Activated B cell treated with CpG ODN at 0.5 μM for 24 hours (primary cell): ENCODE measurements at regions of chr19 and their contacts with region 1.

Region 1: GRCh38 chr19:21020298-21021227 is at the start of gene ZNF430:
- DNase-seq: peak; percentile 77
- ATAC-seq: peak; percentile 95
- H3K4me3 Mint-ChIP-seq: peak within 1 kb of the TSS; percentile 100
- H3K27ac Mint-ChIP-seq: peak within 1 kb of the TSS; percentile 100
- H3K4me1 Mint-ChIP-seq: peaks cover 50% of the 10 kb centered on the region
- H3K27me3 Mint-ChIP-seq: no peaks in the 10 kb centered on the region
- CTCF ChIP-seq: no peak
- total RNA-seq, gene ZNF430: 36.4 and 39.8 TPM in 2 replicates

Region 2: DNA sequence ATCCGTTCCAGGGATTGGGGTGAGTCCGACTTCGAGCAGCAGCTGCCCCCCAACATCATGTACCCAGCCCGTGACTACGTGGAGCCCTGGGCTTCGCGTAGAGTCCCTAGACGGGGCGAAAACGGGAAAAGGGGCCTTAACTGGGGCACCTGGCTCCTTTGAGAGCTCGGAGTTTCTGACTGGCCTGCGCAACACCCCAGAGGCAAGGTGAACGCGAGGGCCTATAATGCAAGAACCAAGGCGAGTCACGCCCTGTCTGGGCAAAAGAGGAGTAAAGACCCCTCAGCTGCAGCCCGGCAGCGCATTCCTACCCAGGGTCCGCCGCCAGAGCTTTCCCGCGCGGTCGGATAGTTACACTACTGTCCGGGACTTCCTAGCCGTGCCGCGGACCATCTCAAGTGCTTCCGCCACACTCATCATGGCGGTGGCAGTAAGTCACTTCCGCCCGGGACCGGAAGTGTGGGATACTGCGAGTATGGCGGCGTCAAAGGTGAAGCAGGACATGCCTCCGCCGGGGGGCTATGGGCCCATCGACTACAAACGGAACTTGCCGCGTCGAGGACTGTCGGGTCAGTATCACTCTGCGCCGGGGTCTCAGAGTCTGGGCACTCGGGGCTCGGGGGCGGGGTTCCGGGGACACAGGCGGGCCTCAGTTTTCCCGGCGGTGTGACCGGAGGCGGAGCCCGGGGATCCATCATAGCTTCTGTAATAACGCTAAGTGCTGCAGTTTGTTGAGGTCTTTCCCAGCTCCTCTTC is 1504.6 kb before region 1 on chr19 and contains the start of gene NDUFA13:
- CTCF ChIA-PET with region 1: no interaction called
- POLR2A ChIA-PET with region 1: no interaction called
- intact Hi-C with region 1: loop called (anchors 5 kb)
- DNase-seq: peak; percentile 97
- ATAC-seq: peak; percentile 90
- H3K4me3 Mint-ChIP-seq: peak within 1 kb of the TSS; percentile 95
- H3K27ac Mint-ChIP-seq: peak within 1 kb of the TSS; percentile 93
- H3K4me1 Mint-ChIP-seq: peaks cover 38% of the 10 kb centered on the region
- H3K27me3 Mint-ChIP-seq: no peaks in the 10 kb centered on the region
- CTCF ChIP-seq: no peak
- total RNA-seq, gene NDUFA13: 294 and 317 TPM in 2 replicates

Region 3: GRCh38 chr19:20565321-20566018 is 455.1 kb before region 1 on chr19 and contains the start of gene ZNF737:
- CTCF ChIA-PET with region 1: no interaction called
- POLR2A ChIA-PET with region 1: interaction called, 12 read pairs
- intact Hi-C with region 1: no loop called
- DNase-seq: peak; percentile 72
- ATAC-seq: peak; percentile 90
- H3K4me3 Mint-ChIP-seq: peak within 1 kb of the TSS; percentile 99
- H3K27ac Mint-ChIP-seq: peak within 1 kb of the TSS; percentile 99
- H3K4me1 Mint-ChIP-seq: peaks cover 32% of the 10 kb centered on the region
- H3K27me3 Mint-ChIP-seq: no peaks in the 10 kb centered on the region
- CTCF ChIP-seq: no peak
- total RNA-seq, gene ZNF737: 42.7 and 50.9 TPM in 2 replicates

Region 4: DNA sequence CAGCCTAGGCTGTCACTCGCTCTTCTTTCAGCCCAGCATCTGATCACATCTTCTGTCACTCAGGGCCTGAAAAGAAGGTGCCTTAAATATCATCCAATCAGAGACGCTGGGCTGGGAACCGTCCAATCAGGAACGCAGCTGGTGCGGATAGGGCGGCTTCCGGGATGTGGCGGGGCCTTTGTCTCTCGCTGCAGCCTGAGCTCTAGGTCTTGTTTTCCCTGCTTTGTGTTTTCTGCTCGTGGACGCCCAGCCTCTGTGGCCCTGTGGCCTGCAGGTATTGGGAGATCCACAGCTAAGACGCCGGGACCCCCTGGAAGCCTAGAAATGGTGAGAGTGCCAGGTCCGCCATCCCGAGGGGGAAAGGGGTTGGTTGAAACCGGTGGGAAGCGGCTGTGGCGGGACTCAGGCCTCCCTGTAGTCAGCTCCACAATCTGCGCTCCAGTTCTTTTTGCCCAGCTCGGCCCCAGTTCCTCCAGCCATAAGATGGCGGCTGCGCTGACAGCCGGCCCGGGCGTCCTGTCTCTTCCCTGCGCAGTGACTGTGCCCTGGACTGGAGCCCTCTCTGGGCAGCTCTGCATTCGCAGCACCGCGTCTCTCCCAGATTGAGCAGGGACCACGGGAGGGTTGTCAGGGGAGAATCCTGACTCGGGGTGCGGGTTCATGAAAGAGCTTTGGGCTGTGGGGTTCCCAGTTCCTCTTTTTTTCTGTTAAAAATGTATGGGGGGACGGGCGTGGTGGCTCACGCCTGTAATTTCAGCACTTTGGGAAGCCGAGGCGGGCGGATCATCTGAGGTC is 97.3 kb before region 1 on chr19 and contains the start of gene ZNF85:
- CTCF ChIA-PET with region 1: no interaction called
- POLR2A ChIA-PET with region 1: interaction called, 12 read pairs
- intact Hi-C with region 1: loop called (anchors 1 kb)
- DNase-seq: peak; percentile 76
- ATAC-seq: peak; percentile 97
- H3K4me3 Mint-ChIP-seq: peak within 1 kb of the TSS; percentile 98
- H3K27ac Mint-ChIP-seq: peak within 1 kb of the TSS; percentile 96
- H3K4me1 Mint-ChIP-seq: peaks cover 13% of the 10 kb centered on the region
- H3K27me3 Mint-ChIP-seq: no peaks in the 10 kb centered on the region
- CTCF ChIP-seq: no peak
- total RNA-seq, gene ZNF85: 15.0 and 18.1 TPM in 2 replicates

Region 5: DNA sequence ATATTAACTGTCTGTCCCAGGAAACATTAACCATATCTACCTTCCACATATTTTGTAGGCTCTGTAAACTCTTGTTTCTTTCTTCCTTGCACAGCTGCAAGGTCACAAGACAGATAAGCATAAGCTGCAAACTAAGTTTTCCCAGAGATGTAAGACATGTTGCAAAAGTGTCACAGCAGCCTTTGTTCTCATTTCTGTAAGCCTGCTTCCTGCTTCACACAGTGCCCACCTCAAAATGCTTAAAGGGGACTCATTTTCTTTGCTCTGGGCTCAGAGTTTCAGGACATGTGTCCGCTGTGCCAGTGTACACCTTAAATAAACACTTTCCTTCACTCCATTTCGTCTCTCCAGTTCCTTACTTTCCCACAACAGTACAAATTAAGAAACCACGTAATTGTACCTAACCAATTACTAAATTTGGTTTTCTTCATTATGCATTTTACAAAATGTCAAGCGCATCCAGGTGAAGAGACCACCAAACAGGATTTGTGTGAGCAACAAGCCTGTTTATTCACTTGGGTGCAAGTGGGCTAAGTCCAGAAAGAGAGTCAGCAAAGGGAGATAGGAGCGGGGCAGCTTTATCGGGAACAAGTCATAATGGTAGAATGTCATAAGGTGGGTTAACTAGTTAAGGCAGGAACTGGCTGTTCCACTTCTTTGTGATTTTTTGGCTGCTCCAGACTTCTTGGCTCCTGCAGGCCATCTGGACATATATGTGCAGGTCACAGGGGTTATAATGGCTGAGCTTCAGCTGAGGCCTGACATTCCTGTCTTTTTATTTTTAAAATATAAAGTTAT is 108.5 kb after region 1 on chr19:
- CTCF ChIA-PET with region 1: no interaction called
- POLR2A ChIA-PET with region 1: no interaction called
- intact Hi-C with region 1: no loop called
- DNase-seq: no peak
- ATAC-seq: no peak
- H3K4me3 Mint-ChIP-seq: no peak overlapping the region
- H3K27ac Mint-ChIP-seq: no peak overlapping the region
- H3K4me1 Mint-ChIP-seq: no peaks in the 10 kb centered on the region
- H3K27me3 Mint-ChIP-seq: peaks cover 8% of the 10 kb centered on the region
- CTCF ChIP-seq: no peak

Region 6: GRCh38 chr19:21141787-21142464 is 121.4 kb after region 1 on chr19 and contains the start of gene ZNF431:
- CTCF ChIA-PET with region 1: no interaction called
- POLR2A ChIA-PET with region 1: interaction called, 11 read pairs
- intact Hi-C with region 1: loop called (anchors 2 kb)
- DNase-seq: peak; percentile 73
- ATAC-seq: peak; percentile 99
- H3K4me3 Mint-ChIP-seq: peak within 1 kb of the TSS; percentile 100
- H3K27ac Mint-ChIP-seq: peak within 1 kb of the TSS; percentile 98
- H3K4me1 Mint-ChIP-seq: peaks cover 32% of the 10 kb centered on the region
- H3K27me3 Mint-ChIP-seq: no peaks in the 10 kb centered on the region
- CTCF ChIP-seq: no peak
- total RNA-seq, gene ZNF431: 33.2 and 34.9 TPM in 2 replicates

Region 7: GRCh38 chr19:21396893-21397572 is 376.5 kb after region 1 on chr19 and contains the start of gene ZNF493:
- CTCF ChIA-PET with region 1: no interaction called
- POLR2A ChIA-PET with region 1: no interaction called
- intact Hi-C with region 1: loop called (anchors 2 kb)
- DNase-seq: peak; percentile 75
- ATAC-seq: peak; percentile 100
- H3K4me3 Mint-ChIP-seq: peak within 1 kb of the TSS; percentile 99
- H3K27ac Mint-ChIP-seq: peak within 1 kb of the TSS; percentile 91
- H3K4me1 Mint-ChIP-seq: peaks cover 29% of the 10 kb centered on the region
- H3K27me3 Mint-ChIP-seq: no peaks in the 10 kb centered on the region
- CTCF ChIP-seq: no peak
- total RNA-seq, gene ZNF493: 45.0 and 52.7 TPM in 2 replicates